CD8-positive, alpha-beta T cell (primary cell): ENCODE measurements at regions of chr6 and their contacts with region 1.

Region 1: DNA sequence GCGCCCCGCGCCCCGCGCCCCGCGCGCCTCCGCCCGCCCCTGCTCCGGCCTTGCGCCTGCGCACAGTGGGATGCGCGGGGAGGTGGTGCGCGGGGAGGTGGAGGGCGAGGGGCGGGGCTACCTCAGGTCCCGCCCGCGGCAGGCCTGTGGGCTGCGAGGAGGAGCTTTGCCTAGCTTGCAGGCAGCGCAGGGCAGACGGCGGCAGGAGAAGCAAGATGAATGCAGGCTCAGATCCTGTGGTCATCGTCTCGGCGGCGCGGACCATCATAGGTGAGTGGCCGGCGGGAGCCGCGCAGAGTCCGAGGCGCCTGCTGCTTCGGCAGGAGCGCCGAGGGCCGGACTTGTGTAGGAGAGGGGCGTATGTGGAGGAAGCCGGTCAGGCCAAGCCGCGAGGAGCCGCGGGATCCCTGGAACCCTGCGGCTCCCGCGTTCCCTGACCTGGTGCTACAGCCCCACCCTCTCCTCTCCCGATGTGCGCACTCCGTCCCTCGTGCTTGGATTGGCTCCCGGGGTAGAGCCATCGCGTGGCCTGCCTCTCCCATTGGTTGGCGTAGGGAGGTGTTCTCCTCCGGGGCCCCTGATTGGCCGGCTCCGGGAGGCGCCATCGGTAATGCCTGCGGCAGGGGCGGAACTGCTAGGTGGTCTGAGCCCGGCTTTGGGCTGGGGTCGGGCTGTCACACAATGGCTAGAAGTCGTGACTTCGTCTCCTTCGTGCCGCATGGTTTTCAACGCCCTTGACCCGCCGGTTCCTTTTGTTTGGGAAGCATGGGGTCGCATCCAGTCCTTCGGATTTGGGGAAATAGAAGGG is at the start of gene ACAT2:
- DNase-seq: peak; percentile 81 to 96 (median 91)
- ATAC-seq: peak; percentile 86
- H3K4me3 ChIP-seq: peak within 1 kb of the TSS; percentile 85 to 99
- H3K4me3 Mint-ChIP-seq: peak within 1 kb of the TSS; percentile 96
- H3K27ac ChIP-seq: peak within 1 kb of the TSS; percentile 97 to 99
- H3K27ac Mint-ChIP-seq: peak within 1 kb of the TSS; percentile 97
- H3K4me1 ChIP-seq: peaks cover 16% of the 10 kb centered on the region
- H3K4me1 Mint-ChIP-seq: peaks cover 29% of the 10 kb centered on the region
- H3K27me3 ChIP-seq: no peaks in the 10 kb centered on the region
- H3K27me3 Mint-ChIP-seq: no peaks in the 10 kb centered on the region
- CTCF ChIP-seq: no peak
- total RNA-seq, gene ACAT2: 23.3 to 24.1 TPM

Region 2: GRCh38 chr6:159745081-159745480 is 17.0 kb before region 1 on chr6:
- CTCF ChIA-PET with region 1: no interaction called
- POLR2A ChIA-PET with region 1: interaction called, 3 read pairs
- intact Hi-C with region 1: loop called in 1 of 2 experiments (anchors 2 kb)
- DNase-seq: no peak
- ATAC-seq: no peak
- H3K4me3 ChIP-seq: no peak overlapping the region
- H3K4me3 Mint-ChIP-seq: no peak overlapping the region
- H3K27ac ChIP-seq: peak overlapping the region in 1 of 2 experiments; percentile 0
- H3K27ac Mint-ChIP-seq: peak overlapping the region; percentile 28
- H3K4me1 ChIP-seq: no peaks in the 10 kb centered on the region
- H3K4me1 Mint-ChIP-seq: peaks cover 36% of the 10 kb centered on the region
- H3K27me3 ChIP-seq: no peaks in the 10 kb centered on the region
- H3K27me3 Mint-ChIP-seq: no peaks in the 10 kb centered on the region
- CTCF ChIP-seq: no peak